ENCODE measurements at regions of chr3 and their contacts with region 1.

Region 1: GRCh38 chr3:36677331-36678007 is 86.9 kb downstream of the DCLK3 start:
- DNase-seq: peak; percentile 85
- H3K4me3 ChIP-seq: no peak overlapping the region
- H3K27ac ChIP-seq: peak overlapping the region; percentile 97
- H3K4me1 ChIP-seq: peaks cover 27% of the 10 kb centered on the region
- H3K27me3 ChIP-seq: no peaks in the 10 kb centered on the region
- CTCF ChIP-seq: peak in 2 of 3 experiments; percentile 17 to 29

Region 2: DNA sequence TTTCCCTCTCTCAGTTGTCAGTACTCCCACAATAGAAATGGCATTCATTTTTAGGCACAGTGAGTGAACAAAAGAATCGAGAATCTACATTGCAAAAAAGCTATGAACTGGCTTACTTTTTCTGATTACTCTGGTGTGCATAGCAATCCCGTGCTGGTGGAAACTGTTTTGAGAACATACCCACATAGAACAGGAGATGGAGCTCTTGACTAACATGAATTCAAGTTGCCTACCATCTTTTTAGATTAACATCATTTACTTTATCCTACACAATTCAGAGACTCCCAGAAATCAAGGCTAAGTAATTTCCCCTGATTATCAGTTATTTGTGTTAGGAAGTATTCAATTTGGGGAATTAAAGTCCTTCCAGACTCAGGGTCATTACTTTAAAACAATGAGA is 711.6 kb before region 1 on chr3:
- dilution Hi-C with region 1: loop called (anchors 25 kb)
- DNase-seq: no peak
- H3K4me3 ChIP-seq: no peak overlapping the region
- H3K27ac ChIP-seq: no peak overlapping the region
- H3K4me1 ChIP-seq: no peaks in the 10 kb centered on the region
- H3K27me3 ChIP-seq: no peaks in the 10 kb centered on the region
- CTCF ChIP-seq: peak; percentile 27 to 50 (median 42)

Region 3: DNA sequence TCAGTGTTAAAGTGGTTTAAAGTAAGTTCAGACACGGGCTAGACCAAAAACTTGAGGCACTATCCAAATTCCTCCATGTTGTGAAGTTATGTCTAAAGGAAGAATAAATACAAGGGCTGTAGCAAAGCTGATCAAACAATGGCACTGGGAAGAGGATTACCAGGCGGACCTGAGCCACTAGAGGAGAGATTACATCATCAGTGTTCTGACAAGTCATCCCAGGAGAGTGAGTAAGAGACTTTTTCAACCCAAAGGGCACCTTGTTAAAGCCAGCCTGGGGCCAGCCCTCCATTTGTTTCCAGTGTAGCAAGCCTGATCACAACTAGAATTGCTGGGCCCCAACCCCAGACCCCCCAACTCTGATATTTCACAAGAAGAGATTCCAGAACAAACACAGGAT is 80.0 kb before region 1 on chr3:
- dilution Hi-C with region 1: loop called (anchors 25 kb)
- DNase-seq: peak; percentile 13
- H3K4me3 ChIP-seq: no peak overlapping the region
- H3K27ac ChIP-seq: no peak overlapping the region
- H3K4me1 ChIP-seq: no peaks in the 10 kb centered on the region
- H3K27me3 ChIP-seq: no peaks in the 10 kb centered on the region
- CTCF ChIP-seq: no peak

Region 4: DNA sequence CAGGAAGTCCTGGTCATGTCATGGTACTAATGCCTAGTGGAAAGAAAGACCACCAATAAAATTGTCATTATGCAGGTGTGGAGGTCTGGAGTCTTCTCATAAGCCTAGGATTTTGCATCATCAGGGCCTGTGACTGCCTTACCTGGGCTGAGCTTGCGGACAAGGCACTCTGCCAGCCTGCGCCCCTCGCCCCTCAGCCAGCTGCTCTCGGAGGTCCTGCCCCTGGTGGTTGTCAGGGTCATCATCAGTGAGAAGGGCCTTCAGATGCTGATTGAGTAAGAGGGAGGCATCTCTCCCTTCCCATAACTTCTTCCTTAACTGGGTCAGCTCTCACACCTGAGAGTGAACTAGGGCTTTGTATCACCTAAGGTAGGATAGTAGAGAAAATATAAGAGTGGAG is 45.9 kb before region 1 on chr3:
- dilution Hi-C with region 1: no loop called
- DNase-seq: no peak
- H3K4me3 ChIP-seq: no peak overlapping the region
- H3K27ac ChIP-seq: no peak overlapping the region
- H3K4me1 ChIP-seq: peaks cover 6% of the 10 kb centered on the region
- H3K27me3 ChIP-seq: no peaks in the 10 kb centered on the region
- CTCF ChIP-seq: no peak

Measured in keratinocyte (primary cell).